Dendritic cell treated with granulocyte-macrophage colony-stimulating factor and Interleukin-4, amounts not matched to agents 40 ng/mL and 50 ng/mL, for 4 days (primary cell): ENCODE measurements at regions of chr11 and their contacts with region 1.

Region 1: DNA sequence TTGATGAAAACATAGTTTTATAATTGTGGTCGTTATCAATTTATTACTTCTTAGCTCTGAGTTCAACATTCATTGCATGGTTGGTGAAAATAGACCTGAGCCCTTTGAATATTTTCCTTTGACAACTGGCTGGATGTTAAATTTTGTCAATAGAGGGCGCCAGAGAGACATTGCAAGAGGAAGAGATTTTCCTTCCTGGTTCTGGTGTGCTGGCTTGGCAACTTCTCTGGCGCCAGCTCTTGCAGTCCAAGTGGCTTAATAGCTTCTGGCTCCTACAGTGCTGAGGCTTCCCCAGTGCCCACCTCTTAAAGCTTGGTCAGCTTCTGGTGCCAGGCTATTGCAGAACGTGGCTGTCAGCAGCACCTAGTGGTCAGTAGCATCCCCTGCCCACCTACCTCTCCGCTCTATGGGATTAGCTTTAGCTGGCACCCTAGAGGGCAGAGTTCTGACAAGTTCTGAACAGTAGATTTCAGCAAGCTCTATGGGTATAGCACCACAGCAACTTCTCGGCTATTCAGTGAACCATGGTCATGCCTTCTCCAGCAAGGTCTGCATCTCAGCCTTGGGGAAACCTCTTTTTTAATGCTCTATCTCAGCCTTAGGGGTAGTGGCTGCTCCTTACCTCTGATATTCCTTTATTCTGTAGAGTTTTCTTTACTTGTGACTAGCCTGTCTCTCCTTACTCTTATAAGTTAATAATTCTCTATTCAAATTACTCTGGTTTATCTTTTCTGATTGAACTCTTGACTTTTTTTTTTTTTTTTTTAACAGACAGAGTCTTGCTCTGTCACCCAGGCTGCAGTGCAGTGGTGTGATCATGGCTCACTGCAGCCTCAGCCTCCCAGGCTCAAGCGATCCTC is 59.4 kb downstream of the ACER3 start:
- H3K4me3 Mint-ChIP-seq: no peak overlapping the region
- H3K27ac Mint-ChIP-seq: no peak overlapping the region
- H3K4me1 Mint-ChIP-seq: peaks cover 11% of the 10 kb centered on the region
- H3K27me3 Mint-ChIP-seq: no peaks in the 10 kb centered on the region

Region 2: GRCh38 chr11:76734456-76735420 is 185.4 kb before region 1 on chr11:
- intact Hi-C with region 1: loop called (anchors 10 kb)
- H3K4me3 Mint-ChIP-seq: no peak overlapping the region
- H3K27ac Mint-ChIP-seq: no peak overlapping the region
- H3K4me1 Mint-ChIP-seq: peaks cover 25% of the 10 kb centered on the region
- H3K27me3 Mint-ChIP-seq: peaks cover 29% of the 10 kb centered on the region

Region 3: DNA sequence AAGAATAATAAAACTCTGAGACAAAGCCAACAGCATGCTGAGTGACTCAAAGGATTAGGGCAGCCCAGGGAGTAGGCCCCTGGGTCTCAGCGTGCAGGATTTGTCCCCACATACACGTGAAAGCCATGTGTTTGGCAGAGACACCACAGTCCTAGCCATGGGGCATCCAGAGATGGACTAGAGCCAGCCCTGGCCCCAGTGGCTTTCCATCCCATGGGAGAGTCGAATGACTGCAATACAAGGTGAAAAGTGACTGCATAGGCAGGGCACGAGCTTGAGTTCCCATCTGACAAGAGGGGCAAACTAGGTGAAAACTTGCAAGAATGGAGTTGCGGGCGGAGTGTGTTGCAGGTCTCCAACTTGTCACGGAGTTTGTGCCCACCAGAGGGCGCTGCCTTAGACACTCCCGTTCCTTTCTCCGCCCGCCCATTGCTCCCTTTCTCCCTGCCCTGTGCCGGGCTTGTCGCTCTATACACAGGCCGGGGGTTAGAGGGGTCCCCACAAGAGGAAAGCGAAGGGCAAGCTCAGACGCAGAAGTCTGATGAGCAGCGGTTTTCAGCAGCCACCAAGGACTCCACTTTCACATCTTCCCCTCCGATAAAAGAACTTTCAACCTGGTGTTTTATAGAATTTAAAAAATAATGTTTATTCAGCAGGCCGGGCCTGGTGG is 112.8 kb before region 1 on chr11:
- intact Hi-C with region 1: loop called (anchors 1 kb)
- H3K4me3 Mint-ChIP-seq: no peak overlapping the region
- H3K27ac Mint-ChIP-seq: no peak overlapping the region
- H3K4me1 Mint-ChIP-seq: peaks cover 38% of the 10 kb centered on the region
- H3K27me3 Mint-ChIP-seq: peaks cover 38% of the 10 kb centered on the region

Region 4: DNA sequence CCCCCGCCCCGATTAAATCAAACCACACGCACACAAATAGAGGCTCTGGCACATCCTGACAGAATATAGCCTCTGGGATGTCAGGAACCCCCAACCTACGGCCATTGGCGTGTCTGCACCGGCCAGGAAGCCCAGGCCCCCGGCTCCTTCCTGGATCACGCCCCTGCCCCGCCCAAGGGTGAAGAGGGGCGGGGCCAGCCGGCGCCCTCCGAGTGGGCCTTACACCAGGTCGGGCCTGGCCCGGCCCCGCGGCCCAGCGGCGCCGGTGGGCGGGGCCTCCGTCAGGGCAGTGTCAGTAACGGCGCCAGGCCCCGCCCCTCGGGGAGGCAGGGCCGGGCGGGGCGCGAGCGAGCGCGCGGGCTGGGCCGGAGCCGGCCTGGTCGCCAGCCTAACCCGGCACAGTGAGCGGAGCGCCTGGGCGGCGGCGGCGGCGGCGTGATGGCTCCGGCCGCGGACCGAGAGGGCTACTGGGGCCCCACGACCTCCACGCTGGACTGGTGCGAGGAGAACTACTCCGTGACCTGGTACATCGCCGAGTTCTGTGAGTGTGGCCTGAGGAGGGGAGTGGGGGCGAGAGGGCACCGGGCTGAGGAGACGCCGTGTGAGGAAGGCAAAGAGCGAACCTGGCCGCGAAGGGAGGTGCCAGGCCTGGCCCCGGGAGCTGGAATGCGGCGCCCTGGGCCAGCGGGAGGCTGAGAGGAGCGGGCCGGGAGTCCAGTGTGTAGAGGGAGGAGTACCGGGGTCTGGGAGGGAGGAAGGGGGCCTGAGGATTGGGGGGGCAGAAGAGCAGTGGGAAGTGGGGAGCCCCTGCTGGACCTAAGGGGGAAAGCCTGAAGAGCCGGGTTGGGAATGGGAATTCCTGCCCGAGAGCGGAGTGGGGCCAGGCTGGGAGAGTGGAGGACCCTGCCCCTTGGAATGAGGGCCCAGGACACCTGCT is 59.3 kb before region 1 on chr11 and contains the start of gene ACER3:
- intact Hi-C with region 1: loop called (anchors 10 kb)
- H3K4me3 Mint-ChIP-seq: peak within 1 kb of the TSS; percentile 96
- H3K27ac Mint-ChIP-seq: peak within 1 kb of the TSS; percentile 97
- H3K4me1 Mint-ChIP-seq: peaks cover 72% of the 10 kb centered on the region
- H3K27me3 Mint-ChIP-seq: no peaks in the 10 kb centered on the region

Region 5: GRCh38 chr11:77101052-77101537 is 181.0 kb after region 1 on chr11:
- intact Hi-C with region 1: no loop called
- H3K4me3 Mint-ChIP-seq: no peak overlapping the region
- H3K27ac Mint-ChIP-seq: no peak overlapping the region
- H3K4me1 Mint-ChIP-seq: no peaks in the 10 kb centered on the region
- H3K27me3 Mint-ChIP-seq: peaks cover 2% of the 10 kb centered on the region